PC-9 (cell line): ENCODE measurements at regions of chr7 and their contacts with region 1.

Region 1: DNA sequence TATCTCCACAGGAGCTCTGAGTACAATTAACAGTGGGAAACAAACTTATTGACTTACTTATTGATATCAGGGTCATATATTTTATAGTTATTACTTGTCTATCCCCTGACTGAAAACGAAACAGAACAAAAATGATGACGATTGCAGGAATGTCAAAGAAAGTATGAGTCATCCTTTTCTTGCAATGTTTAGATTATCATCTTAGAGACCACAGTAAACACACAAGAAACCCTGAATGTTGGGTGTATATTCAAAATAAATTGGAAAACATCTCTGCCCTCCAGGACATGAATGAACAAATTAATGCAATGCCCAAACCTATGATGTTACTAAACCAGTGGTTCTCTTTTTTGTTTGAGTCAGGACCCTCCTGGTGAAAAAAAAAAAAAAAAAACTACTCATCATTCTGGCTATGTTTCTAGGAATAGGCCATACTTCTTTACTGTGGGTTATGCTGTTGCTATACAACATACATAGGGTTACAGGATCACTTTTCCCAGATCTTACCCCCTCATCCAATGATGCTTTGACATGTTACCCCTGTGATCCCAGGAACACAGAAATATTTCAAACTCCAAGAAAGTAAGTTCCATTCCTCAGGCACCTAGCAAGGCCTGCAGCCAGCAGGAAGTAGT is 623.4 kb upstream of the IGFBP3 start:
- DNase-seq: peak; percentile 34 to 84
- H3K4me3 ChIP-seq: no peak overlapping the region
- H3K27ac ChIP-seq: peak overlapping the region; percentile 67
- H3K4me1 ChIP-seq: peaks cover 30% of the 10 kb centered on the region
- H3K27me3 ChIP-seq: no peaks in the 10 kb centered on the region
- CTCF ChIP-seq: no peak

Region 2: DNA sequence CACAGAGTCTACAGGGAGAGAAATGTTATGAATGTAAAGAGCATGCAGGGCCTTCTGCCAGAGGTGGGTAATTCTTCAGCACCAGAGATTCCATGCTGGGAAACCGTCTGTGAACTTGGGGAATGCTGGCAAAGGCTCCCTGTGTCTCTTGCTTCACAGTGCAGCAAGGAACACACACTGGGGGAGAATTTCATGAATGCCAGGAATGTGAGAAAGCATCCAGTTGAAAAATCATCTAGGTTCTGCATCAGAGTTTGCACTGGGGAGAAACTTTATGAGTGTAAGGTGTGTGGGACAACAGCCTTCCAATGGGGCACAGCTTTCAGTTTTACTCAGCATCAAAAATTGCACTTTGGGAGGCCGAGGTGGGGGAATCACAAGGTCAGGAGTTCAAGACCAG is 399.1 kb before region 1 on chr7:
- CTCF ChIA-PET with region 1: no interaction called
- POLR2A ChIA-PET with region 1: no interaction called
- intact Hi-C with region 1: loop called (anchors 10 kb)
- DNase-seq: peak; percentile 89 to 99
- H3K4me3 ChIP-seq: no peak overlapping the region
- H3K27ac ChIP-seq: peak overlapping the region; percentile 80
- H3K4me1 ChIP-seq: peaks cover 29% of the 10 kb centered on the region
- H3K27me3 ChIP-seq: no peaks in the 10 kb centered on the region
- CTCF ChIP-seq: no peak

Region 3: DNA sequence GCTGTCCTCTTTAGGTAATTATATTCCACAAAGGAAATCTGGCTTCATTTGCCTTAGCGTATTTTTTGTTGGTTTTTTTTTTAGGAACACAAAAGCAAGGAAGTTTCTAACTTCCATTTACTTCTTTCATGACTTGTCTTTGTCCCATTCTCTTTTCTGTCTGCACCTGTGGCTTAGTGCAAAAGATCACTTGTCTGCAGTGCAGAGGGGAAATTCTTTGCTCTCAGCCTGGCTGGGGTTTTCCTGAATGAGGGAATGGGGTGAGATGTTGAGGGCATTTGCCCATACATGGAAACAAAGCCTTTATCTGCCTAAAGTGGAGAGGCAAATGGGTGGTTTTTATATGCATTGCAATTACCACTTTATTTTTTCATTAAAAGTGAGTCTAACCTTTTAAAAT is 262.3 kb before region 1 on chr7:
- CTCF ChIA-PET with region 1: no interaction called
- POLR2A ChIA-PET with region 1: no interaction called
- intact Hi-C with region 1: loop called (anchors 10 kb)
- DNase-seq: no peak
- H3K4me3 ChIP-seq: no peak overlapping the region
- H3K27ac ChIP-seq: peak overlapping the region; percentile 83
- H3K4me1 ChIP-seq: peaks cover 31% of the 10 kb centered on the region
- H3K27me3 ChIP-seq: no peaks in the 10 kb centered on the region
- CTCF ChIP-seq: no peak

Region 4: GRCh38 chr7:46432666-46433065 is 111.8 kb before region 1 on chr7:
- CTCF ChIA-PET with region 1: no interaction called
- POLR2A ChIA-PET with region 1: no interaction called
- intact Hi-C with region 1: loop called (anchors 1 kb)
- DNase-seq: peak; percentile 46 to 94
- H3K4me3 ChIP-seq: no peak overlapping the region
- H3K27ac ChIP-seq: peak overlapping the region; percentile 47
- H3K4me1 ChIP-seq: peaks cover 16% of the 10 kb centered on the region
- H3K27me3 ChIP-seq: no peaks in the 10 kb centered on the region
- CTCF ChIP-seq: no peak

Region 5: GRCh38 chr7:46486256-46487206 is 58.0 kb before region 1 on chr7:
- CTCF ChIA-PET with region 1: no interaction called
- POLR2A ChIA-PET with region 1: no interaction called
- intact Hi-C with region 1: loop called (anchors 1 kb)
- DNase-seq: no peak
- H3K4me3 ChIP-seq: no peak overlapping the region
- H3K27ac ChIP-seq: peak overlapping the region; percentile 18
- H3K4me1 ChIP-seq: peaks cover 26% of the 10 kb centered on the region
- H3K27me3 ChIP-seq: no peaks in the 10 kb centered on the region
- CTCF ChIP-seq: no peak

Region 6: DNA sequence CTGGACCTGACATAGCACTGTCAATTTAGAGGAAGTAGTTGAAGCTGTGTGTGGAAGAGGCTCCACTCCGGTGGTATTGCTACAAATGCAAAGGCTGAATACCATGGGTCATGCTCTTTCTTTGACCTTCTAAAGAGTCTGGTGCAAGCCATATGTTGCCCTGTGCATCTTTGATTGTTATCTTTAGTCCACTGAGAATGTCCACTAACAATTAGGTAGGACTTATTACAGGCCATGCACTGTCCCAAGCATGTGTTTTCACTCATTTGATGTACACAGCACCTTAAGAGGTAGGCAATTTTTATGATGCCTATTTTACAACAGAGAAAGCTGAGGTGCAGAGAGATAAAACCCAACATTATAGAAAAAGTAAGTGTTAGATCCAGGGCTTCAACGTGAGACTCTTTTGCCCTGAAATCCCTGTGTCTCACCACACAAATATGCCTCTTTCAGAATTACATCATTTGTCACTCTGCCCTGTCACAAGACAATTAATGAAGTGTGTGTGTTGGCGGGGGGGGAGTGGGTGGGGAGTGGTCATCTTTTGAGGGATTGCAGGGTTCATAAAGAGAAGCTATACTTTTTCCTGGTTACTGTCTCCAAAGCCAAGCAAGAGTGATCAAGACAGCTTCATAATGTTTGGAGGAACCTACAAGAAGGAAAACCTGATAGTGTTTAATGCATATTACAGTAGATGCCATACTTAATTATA is 14.1 kb after region 1 on chr7:
- CTCF ChIA-PET with region 1: no interaction called
- POLR2A ChIA-PET with region 1: interaction called, 4 read pairs
- intact Hi-C with region 1: loop called (anchors 1 kb)
- DNase-seq: peak; percentile 45 to 87
- H3K4me3 ChIP-seq: peak overlapping the region; percentile 21; the same call in 1 of the 2 replicates
- H3K27ac ChIP-seq: peak overlapping the region; percentile 93
- H3K4me1 ChIP-seq: peaks cover 34% of the 10 kb centered on the region
- H3K27me3 ChIP-seq: no peaks in the 10 kb centered on the region
- CTCF ChIP-seq: no peak

Region 7: DNA sequence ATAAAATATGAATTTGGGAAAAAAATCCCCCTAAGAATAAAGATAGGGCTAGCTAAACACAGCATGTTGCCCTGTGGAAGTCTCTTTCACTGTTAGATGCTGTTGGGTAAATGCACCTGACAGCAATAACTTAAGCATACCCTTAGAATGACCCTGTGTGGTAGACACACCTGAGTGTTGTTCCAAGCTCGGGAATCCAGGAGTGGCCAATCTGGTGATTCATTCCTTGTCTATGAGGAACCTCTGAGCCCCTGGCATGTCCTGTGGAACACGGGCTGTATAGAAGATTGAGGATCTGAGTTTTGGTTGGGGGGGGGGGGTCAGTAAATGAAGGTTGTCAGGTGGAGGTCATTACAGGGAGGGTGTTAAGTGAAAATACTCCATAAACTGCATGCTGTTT is 106.6 kb after region 1 on chr7:
- CTCF ChIA-PET with region 1: no interaction called
- POLR2A ChIA-PET with region 1: no interaction called
- intact Hi-C with region 1: loop called (anchors 1 kb)
- DNase-seq: peak; percentile 79 to 97
- H3K4me3 ChIP-seq: no peak overlapping the region
- H3K27ac ChIP-seq: peak overlapping the region; percentile 96
- H3K4me1 ChIP-seq: peaks cover 35% of the 10 kb centered on the region
- H3K27me3 ChIP-seq: no peaks in the 10 kb centered on the region
- CTCF ChIP-seq: no peak